Dendritic cell treated with granulocyte-macrophage colony-stimulating factor and Interleukin-4, amounts not matched to agents 40 ng/mL and 50 ng/mL, for 4 days (primary cell): ENCODE measurements at regions of chr10 and their contacts with region 1.

Region 1: GRCh38 chr10:75210282-75211006 is at the start of gene VDAC2:
- H3K4me3 Mint-ChIP-seq: peak within 1 kb of the TSS; percentile 97
- H3K27ac Mint-ChIP-seq: peak within 1 kb of the TSS; percentile 99
- H3K4me1 Mint-ChIP-seq: peaks cover 27% of the 10 kb centered on the region
- H3K27me3 Mint-ChIP-seq: no peaks in the 10 kb centered on the region

Region 2: DNA sequence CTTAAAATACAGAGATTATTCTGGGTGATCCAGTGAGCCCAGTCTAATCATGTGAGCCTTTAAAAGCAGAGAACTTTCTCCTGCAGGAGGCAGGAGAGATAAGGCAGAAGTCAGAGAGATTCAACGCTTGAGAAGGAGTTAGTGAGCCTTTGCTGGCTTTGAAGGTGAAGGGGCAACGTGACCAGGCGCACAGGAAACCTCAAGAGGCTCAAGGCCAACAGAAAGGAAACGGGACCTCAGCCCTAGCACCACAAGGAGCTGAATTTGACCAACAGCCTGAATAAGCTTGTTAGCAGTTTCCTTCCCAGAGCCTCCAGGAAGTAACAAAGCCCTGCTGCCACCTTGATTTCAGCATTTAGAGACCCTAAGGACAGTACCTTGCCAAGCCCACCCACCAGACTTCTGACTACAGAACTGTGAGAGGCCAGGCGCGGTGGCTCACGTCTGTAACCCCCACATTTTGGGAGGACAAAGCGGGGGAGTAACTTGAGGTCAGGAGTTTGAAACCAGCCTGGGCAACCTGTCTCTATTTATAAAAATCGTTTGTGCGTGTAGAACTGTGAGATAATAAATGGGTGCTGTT is 471.4 kb before region 1 on chr10:
- intact Hi-C with region 1: no loop called
- H3K4me3 Mint-ChIP-seq: no peak overlapping the region
- H3K27ac Mint-ChIP-seq: peak overlapping the region; percentile 34
- H3K4me1 Mint-ChIP-seq: peaks cover 27% of the 10 kb centered on the region
- H3K27me3 Mint-ChIP-seq: no peaks in the 10 kb centered on the region

Region 3: GRCh38 chr10:74826142-74827044 is 384.1 kb before region 1 on chr10 and contains the start of gene KAT6B:
- intact Hi-C with region 1: loop called (anchors 5 kb)
- H3K4me3 Mint-ChIP-seq: peak within 1 kb of the TSS; percentile 92
- H3K27ac Mint-ChIP-seq: peak within 1 kb of the TSS; percentile 91
- H3K4me1 Mint-ChIP-seq: peaks cover 41% of the 10 kb centered on the region
- H3K27me3 Mint-ChIP-seq: peaks cover 8% of the 10 kb centered on the region

Region 4: DNA sequence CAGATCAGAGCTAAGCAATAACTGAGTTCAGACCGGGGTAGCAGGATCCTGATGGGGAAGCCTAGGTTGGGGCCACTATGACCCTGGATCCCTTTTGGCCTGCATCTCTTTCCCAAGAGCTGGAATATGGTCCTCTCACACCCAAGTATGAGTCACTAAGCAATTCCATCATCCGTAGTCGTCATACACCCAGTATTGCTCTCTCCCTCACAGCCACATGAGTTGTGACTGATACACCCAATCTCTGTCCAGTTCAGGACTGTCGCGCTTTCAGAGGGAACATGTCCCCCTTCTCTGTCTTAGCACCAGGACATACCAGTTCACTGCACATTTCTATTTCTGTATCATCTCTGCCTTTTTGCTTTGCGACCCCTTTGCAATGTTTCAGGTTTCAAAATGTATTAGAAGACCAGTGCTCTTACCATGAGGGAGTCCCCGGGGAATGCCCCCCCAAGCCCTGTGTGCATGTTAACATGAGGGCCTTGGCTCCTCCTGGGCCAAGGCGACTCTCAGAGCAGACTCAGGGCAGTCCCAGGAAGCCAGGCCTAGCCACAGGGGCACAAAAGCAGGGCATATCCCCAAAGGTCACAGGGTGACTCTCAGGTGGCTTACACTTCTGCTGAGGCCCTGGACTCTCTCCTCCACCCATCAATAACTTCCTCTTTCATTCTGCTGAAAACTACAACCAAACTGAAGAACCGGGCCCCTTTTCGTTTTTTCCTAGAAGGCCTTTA is 174.3 kb before region 1 on chr10:
- intact Hi-C with region 1: no loop called
- H3K4me3 Mint-ChIP-seq: no peak overlapping the region
- H3K27ac Mint-ChIP-seq: no peak overlapping the region
- H3K4me1 Mint-ChIP-seq: peaks cover 17% of the 10 kb centered on the region
- H3K27me3 Mint-ChIP-seq: no peaks in the 10 kb centered on the region

Region 5: DNA sequence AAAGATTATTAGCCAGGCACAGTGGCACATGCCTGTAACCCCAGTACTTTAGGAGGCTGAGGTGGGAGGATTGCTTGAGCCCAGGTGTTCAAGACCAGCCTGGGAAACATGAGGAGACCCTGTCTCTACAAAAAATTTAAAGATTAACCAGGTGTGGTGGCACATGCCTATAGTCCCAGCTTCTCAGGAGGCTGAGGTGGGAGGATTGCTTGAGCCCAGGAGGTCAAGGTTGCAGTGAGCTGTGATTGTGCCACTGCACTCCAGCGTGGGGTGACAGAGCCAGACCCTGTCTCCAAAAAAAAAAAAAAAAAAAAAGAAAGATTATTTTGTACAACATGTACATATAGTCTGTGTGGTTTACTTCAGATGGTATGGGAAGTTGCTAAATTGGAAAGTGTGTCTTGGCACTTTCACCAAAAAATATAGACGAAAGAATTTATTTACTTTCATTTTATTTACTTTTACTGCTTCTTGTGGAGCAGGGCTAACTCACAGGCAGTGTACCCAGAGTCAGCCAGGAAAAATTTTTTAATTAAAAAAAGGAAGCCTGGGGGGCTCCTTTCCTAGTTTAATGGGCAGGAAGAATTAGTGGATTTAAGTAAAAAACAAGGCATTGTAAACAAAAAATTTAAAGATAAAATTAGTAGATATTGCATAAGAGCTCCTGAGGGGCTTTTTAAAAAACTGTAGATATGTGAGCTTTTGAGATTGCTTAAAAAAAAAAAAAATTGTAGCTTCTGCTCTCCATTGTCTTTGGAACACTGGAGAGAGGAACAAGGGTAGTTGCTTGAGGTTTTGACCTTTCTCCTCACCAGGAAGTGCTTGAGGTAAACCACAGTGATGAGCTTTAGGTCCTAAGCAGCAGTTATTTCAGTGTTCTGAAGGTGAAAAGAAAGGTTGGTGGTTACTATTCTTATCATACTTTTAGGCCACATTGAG is 44.5 kb before region 1 on chr10:
- intact Hi-C with region 1: no loop called
- H3K4me3 Mint-ChIP-seq: no peak overlapping the region
- H3K27ac Mint-ChIP-seq: peak overlapping the region; percentile 25
- H3K4me1 Mint-ChIP-seq: peaks cover 16% of the 10 kb centered on the region
- H3K27me3 Mint-ChIP-seq: no peaks in the 10 kb centered on the region

Region 6: DNA sequence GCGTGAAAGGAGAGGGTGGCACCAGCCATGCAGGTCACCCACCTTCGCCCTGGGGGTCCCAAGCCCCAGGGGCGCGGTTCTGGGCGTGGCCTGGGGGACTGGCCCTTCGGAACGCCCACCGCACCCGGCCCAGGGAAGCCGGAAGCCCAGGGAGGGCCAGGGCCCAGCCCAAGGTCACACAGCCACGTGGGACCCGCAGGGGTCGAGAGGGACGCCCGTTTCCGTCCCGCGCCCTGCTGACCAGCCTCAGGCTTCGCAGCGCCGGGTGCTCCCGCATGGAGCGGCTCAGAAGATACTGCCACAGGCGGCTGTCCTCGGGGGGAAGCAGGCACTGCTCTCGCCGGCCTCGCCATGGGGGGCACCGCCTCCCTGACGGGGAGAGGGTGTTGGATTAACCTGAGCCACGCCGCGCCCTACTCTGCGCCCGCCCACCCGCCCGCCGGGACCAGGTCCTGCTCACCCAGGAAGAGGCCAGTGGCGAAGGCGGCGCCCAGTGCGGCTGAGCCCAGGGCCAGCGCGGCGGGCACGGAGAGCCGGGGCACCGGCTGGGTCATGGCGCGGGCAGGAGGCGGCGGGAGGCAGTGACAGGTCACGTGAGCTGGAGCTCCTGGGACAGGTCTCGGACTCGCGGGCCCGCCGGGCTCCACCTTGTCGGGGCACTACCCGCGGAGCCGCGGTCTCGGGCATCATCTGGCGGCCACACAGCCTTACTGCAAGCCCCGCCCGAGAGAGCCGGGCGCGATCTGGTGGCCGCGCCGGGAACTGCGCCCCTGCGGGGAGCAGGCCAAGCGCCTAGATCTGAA is 25.1 kb after region 1 on chr10 and contains the start of gene COMTD1:
- intact Hi-C with region 1: loop called (anchors 2 kb)
- H3K4me3 Mint-ChIP-seq: peak within 1 kb of the TSS; percentile 83
- H3K27ac Mint-ChIP-seq: peak within 1 kb of the TSS; percentile 72
- H3K4me1 Mint-ChIP-seq: peaks cover 21% of the 10 kb centered on the region
- H3K27me3 Mint-ChIP-seq: no peaks in the 10 kb centered on the region

Region 7: DNA sequence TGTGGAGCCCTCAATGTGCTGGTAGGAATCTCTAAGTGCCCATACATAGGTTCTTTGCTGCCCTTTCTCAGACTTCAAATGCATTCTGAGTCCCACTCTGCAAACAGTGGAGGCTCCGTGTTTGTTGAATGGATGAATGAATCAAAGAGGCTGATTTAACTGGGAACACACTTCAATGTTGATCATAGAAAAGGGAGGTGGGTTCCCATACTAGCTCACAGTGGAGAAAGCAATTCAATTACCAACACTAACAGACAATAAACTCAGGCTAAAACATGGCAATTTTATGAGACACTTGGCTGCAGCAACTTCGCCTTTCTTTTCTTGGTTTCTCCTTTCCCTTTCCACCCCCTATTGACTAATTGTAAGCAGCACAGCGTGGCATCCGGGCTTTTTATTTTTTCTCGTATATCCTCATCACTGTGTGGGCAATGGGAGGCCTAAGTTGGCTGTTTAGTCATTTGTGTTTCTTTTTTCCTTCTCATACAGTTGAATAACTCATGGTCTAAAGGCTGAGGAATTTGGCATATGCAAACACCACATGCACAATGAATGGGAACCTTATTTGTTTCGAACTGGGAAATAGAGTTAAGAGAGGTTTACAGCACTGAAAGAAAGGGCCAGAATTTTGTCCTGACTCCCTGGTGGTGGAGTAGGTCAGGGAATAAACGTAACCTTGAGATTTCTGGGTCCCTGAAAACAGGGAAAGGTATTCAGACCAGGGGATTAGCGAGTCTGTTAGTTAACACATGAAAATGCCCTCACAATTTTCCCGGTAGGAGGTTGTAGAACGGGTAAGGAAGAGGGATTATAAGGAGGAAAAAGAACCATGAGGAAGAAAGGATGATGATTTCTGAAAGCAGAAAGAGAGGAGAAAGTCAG is 1568.7 kb after region 1 on chr10:
- intact Hi-C with region 1: no loop called
- H3K4me3 Mint-ChIP-seq: no peak overlapping the region
- H3K27ac Mint-ChIP-seq: no peak overlapping the region
- H3K4me1 Mint-ChIP-seq: no peaks in the 10 kb centered on the region
- H3K27me3 Mint-ChIP-seq: no peaks in the 10 kb centered on the region